Mammary epithelial cell (primary cell): ENCODE measurements at regions of chr18 and their contacts with region 1.

Region 1: DNA sequence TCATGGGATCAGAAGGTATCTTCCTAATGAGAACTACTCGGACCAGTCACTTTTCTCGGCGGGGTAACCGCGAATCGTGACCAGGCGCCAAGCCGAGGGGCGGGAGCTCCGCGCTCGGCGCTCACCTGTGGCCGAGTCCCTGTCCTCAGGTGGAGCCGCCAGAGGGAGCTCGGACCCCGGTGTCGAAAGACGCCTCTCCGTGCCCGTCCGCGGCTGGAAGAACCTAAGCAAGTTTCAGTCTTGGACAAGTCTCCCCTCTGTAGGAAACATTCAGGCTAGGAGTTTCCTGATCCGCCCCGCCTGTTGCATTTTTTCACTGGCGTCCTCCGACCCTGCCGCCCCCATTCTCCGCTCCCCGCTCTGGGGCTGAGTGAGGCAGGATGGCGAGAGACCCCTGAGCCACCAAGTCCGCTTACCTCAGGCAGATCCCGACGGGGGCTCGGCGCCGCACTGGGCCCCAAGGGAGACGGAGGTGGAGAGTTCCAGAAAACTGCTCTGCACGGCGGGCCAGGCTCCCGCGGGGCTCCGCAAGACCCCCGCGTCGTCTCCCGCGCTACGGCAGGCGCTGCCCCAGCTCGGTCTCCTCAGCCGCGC is 478 bp downstream of the DSEL start:
- DNase-seq: peak; percentile 89
- H3K4me3 ChIP-seq: peak overlapping the region; percentile 75 to 96 (median 91)
- H3K27ac ChIP-seq: peak overlapping the region; percentile 67
- H3K4me1 ChIP-seq: peaks cover 8% of the 10 kb centered on the region
- H3K27me3 ChIP-seq: no peaks in the 10 kb centered on the region
- CTCF ChIP-seq: peak; percentile 67 to 89

Region 2: DNA sequence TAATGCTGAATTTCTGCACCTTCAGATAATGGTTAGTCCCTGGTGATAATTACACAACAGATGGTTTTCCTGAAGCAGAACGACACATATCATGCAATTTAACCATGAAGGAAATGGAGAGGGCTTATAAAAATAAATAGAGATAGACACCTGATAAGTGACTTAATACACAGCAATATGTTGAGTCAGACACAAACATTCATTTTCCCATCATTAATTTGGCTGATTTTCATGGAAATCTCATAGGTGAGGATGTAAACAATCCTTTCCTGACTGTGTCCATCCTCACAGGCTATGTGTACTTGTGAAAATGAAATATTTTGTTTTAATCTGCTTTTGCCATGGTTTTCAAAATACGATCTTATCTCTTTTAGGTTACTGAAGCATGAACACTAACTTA is 37.4 kb after region 1 on chr18:
- CTCF ChIA-PET with region 1: no interaction called
- dilution Hi-C with region 1: no loop called
- in situ Hi-C with region 1: no loop called
- intact Hi-C with region 1: no loop called
- DNase-seq: no peak
- H3K4me3 ChIP-seq: no peak overlapping the region
- H3K27ac ChIP-seq: no peak overlapping the region
- H3K4me1 ChIP-seq: no peaks in the 10 kb centered on the region
- H3K27me3 ChIP-seq: no peaks in the 10 kb centered on the region
- CTCF ChIP-seq: no peak

Region 3: DNA sequence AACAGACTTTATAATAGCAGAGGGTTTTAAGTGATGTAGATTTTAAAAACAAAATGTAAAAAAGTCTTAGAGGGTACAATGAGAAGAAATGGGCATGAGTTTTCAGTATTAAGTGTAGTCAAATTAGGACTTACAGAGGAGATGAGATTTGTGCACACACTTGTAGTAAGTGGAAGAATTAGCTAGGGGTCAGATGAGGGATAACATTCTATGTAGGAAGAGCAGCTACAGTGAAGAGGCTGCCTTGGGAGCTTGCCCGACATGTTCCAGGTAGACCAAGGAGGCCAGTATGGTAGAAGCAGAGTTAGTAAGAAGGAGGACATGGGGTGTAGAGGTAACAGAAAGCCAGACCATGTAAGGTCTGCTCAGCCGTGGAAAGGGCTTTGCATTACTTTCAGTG is 189.7 kb after region 1 on chr18:
- CTCF ChIA-PET with region 1: interaction called, 9 read pairs
- dilution Hi-C with region 1: no loop called
- in situ Hi-C with region 1: no loop called
- intact Hi-C with region 1: loop called (anchors 5 kb)
- DNase-seq: no peak
- H3K4me3 ChIP-seq: no peak overlapping the region
- H3K27ac ChIP-seq: no peak overlapping the region
- H3K4me1 ChIP-seq: no peaks in the 10 kb centered on the region
- H3K27me3 ChIP-seq: no peaks in the 10 kb centered on the region
- CTCF ChIP-seq: peak in 1 of 2 donors; percentile 35

Region 4: GRCh38 chr18:67845035-67845434 is 329.0 kb after region 1 on chr18:
- CTCF ChIA-PET with region 1: no interaction called
- dilution Hi-C with region 1: no loop called
- in situ Hi-C with region 1: no loop called
- intact Hi-C with region 1: loop called (anchors 1 kb)
- DNase-seq: peak; percentile 13
- H3K4me3 ChIP-seq: no peak overlapping the region
- H3K27ac ChIP-seq: no peak overlapping the region
- H3K4me1 ChIP-seq: no peaks in the 10 kb centered on the region
- H3K27me3 ChIP-seq: no peaks in the 10 kb centered on the region
- CTCF ChIP-seq: peak; percentile 9 to 53

Region 5: GRCh38 chr18:67938660-67939059 is 422.6 kb after region 1 on chr18:
- CTCF ChIA-PET with region 1: no interaction called
- dilution Hi-C with region 1: no loop called
- in situ Hi-C with region 1: no loop called
- intact Hi-C with region 1: loop called (anchors 10 kb)
- DNase-seq: no peak
- H3K4me3 ChIP-seq: no peak overlapping the region
- H3K27ac ChIP-seq: no peak overlapping the region
- H3K4me1 ChIP-seq: no peaks in the 10 kb centered on the region
- H3K27me3 ChIP-seq: no peaks in the 10 kb centered on the region
- CTCF ChIP-seq: no peak

Region 6: DNA sequence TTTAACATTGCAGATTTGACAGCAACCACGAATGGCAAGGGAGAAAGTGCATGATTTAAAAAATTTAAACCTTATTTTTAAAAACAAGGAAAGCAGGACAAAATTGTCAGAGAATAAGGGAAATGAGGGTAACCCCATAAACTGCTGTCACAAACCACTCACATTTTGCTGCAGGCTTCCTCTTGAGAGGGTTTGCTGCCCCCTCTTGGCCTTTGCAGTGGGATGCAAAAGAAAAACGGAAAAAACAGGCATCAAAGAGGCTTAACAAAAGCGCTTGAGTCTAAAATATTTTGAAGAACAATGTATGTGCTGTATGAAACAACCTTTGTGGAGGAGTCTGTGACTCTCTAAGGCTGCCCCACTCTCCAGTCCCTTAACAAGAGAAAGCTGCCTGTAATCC is 1107.3 kb after region 1 on chr18:
- CTCF ChIA-PET with region 1: no interaction called
- dilution Hi-C with region 1: no loop called
- in situ Hi-C with region 1: loop called in 1 of 2 experiments (anchors 10 kb)
- intact Hi-C with region 1: loop called (anchors 1 kb)
- DNase-seq: peak; percentile 45
- H3K4me3 ChIP-seq: no peak overlapping the region
- H3K27ac ChIP-seq: no peak overlapping the region
- H3K4me1 ChIP-seq: no peaks in the 10 kb centered on the region
- H3K27me3 ChIP-seq: no peaks in the 10 kb centered on the region
- CTCF ChIP-seq: peak; percentile 81 to 89